Activated T-helper 1 cell treated with anti-CD3 and anti-CD28 coated beads, Interleukin-12 subunit alpha, Interleukin-12 subunit beta, Interleukin-2, Interleukin-4 antibody, amounts not matched to agents 30 ng/mL and 10 ng/mL and 1 ng/mL, durations not matched to agents 14 hours and 24 hours and 36 hours (primary cell): ENCODE measurements at regions of chr15 and their contacts with region 1.

Region 1: DNA sequence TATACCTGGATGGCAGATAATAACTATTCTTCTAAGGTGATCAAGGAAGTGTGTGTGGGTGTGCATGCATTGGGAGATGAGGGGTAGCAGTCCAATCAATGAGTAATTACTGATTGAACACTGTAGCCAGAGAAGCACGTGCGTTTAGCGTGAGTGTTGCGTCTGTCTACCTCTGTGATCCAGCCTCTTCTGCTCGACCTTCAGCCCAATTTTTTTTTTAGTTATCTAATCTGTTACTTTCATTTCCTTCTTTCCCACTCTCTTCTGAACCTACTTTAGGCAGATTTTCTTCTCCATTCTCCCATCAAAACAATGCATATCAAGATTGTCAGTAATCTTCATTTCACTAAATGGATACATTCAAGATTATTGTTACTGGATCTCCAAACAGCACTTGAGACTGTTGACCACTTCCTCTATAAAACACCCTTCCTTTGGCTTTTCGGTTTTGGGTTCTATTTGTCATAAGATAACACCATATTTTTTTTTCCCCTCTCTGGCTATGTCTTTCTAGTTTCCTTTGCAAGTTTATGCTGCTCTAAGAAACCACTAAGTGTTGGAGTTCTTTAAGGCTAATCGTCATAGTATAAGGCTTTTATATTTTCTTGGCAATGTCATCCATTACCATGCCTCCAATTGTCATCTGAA is 41.0 kb downstream of the MCTP2 start:
- DNase-seq: no peak
- H3K4me3 Mint-ChIP-seq: no peak overlapping the region
- H3K27ac Mint-ChIP-seq: no peak overlapping the region
- H3K4me1 Mint-ChIP-seq: peaks cover 12% of the 10 kb centered on the region
- H3K27me3 Mint-ChIP-seq: no peaks in the 10 kb centered on the region

Region 2: GRCh38 chr15:94174399-94174802 is 98.0 kb before region 1 on chr15:
- intact Hi-C with region 1: loop called (anchors 1 kb)
- DNase-seq: no peak
- H3K4me3 Mint-ChIP-seq: peak overlapping the region; percentile 38
- H3K27ac Mint-ChIP-seq: peak overlapping the region; percentile 85
- H3K4me1 Mint-ChIP-seq: peaks cover 58% of the 10 kb centered on the region
- H3K27me3 Mint-ChIP-seq: no peaks in the 10 kb centered on the region

Region 3: DNA sequence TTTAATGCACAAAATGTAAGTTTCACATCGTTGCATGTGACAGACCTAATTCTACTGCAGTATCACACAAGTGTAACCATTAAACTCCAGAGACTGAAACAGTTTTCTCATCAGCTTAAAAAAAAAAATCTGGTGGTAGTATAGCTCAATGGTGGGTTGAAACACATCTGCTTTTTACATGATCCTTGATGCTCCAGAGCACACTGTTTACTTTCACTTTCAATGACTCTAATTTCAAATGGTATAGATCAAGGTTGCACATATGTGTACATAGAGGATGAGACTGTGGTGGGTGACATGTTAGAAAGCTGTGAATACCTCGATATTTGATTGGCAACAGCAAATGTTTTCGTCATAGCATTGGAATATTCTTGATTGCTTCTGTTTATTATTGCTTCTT is 18.6 kb before region 1 on chr15:
- intact Hi-C with region 1: loop called (anchors 2 kb)
- DNase-seq: no peak
- H3K4me3 Mint-ChIP-seq: peak overlapping the region; percentile 17
- H3K27ac Mint-ChIP-seq: no peak overlapping the region
- H3K4me1 Mint-ChIP-seq: peaks cover 80% of the 10 kb centered on the region
- H3K27me3 Mint-ChIP-seq: no peaks in the 10 kb centered on the region

Region 4: GRCh38 chr15:94287794-94288246 is 15.4 kb after region 1 on chr15:
- intact Hi-C with region 1: loop called (anchors 2 kb)
- DNase-seq: peak; percentile 67
- H3K4me3 Mint-ChIP-seq: peak overlapping the region; percentile 80
- H3K27ac Mint-ChIP-seq: peak overlapping the region; percentile 91
- H3K4me1 Mint-ChIP-seq: peaks cover 75% of the 10 kb centered on the region
- H3K27me3 Mint-ChIP-seq: no peaks in the 10 kb centered on the region

Region 5: GRCh38 chr15:94324117-94324826 is 51.9 kb after region 1 on chr15:
- intact Hi-C with region 1: loop called (anchors 1 kb)
- DNase-seq: peak; percentile 44
- H3K4me3 Mint-ChIP-seq: no peak overlapping the region
- H3K27ac Mint-ChIP-seq: no peak overlapping the region
- H3K4me1 Mint-ChIP-seq: peaks cover 48% of the 10 kb centered on the region
- H3K27me3 Mint-ChIP-seq: no peaks in the 10 kb centered on the region